H1 (cell line): ENCODE measurements at regions of chr11 and their contacts with region 1.

Region 1: GRCh38 chr11:120912504-120912903 is 111.4 kb upstream of the TBCEL start:
- DNase-seq: no peak
- H3K4me3 ChIP-seq: no peak overlapping the region
- H3K27ac ChIP-seq: no peak overlapping the region
- H3K4me1 ChIP-seq: no peaks in the 10 kb centered on the region
- H3K27me3 ChIP-seq: no peaks in the 10 kb centered on the region; a peak in 1 of 7 replicates
- CTCF ChIP-seq: peak in 2 of 3 experiments; percentile 42 to 75; a peak in 2 of 4 replicates
- EP300 ChIP-seq: no peak
- POLR2A ChIP-seq: no peak
- RAD21 ChIP-seq: peak; percentile 28 to 49

Region 2: DNA sequence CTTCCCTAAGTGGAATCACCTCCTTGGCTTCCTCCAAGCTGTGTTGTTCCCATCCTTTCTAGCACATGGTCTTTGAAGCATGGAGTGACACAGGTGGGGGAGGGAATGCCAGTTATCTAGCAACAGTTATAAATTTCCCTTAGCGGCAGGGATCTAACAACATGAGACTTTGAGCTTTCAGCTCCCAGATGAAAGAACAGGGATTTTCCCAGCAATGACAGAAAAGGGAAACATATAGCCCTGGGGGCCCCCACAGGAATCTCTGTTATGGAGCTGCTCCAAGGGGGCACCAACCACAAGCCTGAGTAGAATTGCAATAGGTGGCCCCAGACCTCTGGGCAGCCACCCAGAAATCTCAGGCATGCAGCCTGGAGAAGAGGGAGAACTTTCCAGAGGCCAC is 238.0 kb before region 1 on chr11:
- CTCF ChIA-PET with region 1: no interaction called
- POLR2A ChIA-PET with region 1: no interaction called
- DNase-seq: no peak
- H3K4me3 ChIP-seq: no peak overlapping the region
- H3K27ac ChIP-seq: no peak overlapping the region
- H3K4me1 ChIP-seq: no peaks in the 10 kb centered on the region
- H3K27me3 ChIP-seq: no peaks in the 10 kb centered on the region
- CTCF ChIP-seq: no peak
- EP300 ChIP-seq: no peak
- POLR2A ChIP-seq: no peak
- RAD21 ChIP-seq: no peak

Region 3: DNA sequence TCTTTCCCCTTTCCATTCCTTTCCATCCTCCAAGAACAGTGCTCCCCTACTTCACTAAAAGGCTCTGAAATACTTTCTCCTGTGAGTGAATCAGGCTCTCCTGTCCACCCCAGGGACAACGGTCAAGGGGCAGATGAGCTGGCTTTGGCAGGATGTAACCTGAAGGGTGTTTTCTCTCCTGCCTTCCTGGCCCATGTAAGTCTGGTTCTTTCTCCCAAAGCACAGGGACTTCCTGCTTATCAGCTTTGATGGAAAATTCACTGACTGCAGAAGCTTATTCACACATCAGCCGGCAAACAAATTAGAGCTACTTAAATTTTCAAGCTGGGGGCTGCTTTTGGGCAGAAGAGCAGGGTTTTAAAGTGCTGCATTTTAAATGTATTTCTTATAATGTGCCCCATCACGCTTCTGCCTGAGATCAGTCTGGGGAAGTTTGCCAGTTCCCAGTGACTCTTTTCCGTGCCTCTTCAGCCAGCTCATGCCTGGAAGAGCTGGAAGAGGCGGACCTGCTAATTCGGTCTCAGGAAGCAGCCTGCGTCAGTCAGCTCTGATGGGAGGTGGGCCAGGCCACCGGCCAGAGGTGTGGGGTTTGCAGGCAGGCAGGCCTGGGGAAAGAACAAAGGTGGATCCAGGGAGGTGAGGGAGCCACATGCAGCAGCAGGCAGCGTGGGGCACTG is 29.0 kb before region 1 on chr11:
- CTCF ChIA-PET with region 1: interaction called, 13 read pairs
- POLR2A ChIA-PET with region 1: no interaction called
- DNase-seq: no peak
- H3K4me3 ChIP-seq: no peak overlapping the region
- H3K27ac ChIP-seq: no peak overlapping the region
- H3K4me1 ChIP-seq: peaks cover 0 to 3% (median under 1%) of the 10 kb centered on the region in 4 experiments; a peak in 2 of 7 replicates
- H3K27me3 ChIP-seq: no peaks in the 10 kb centered on the region
- CTCF ChIP-seq: no peak
- EP300 ChIP-seq: no peak
- POLR2A ChIP-seq: no peak
- RAD21 ChIP-seq: no peak

Region 4: DNA sequence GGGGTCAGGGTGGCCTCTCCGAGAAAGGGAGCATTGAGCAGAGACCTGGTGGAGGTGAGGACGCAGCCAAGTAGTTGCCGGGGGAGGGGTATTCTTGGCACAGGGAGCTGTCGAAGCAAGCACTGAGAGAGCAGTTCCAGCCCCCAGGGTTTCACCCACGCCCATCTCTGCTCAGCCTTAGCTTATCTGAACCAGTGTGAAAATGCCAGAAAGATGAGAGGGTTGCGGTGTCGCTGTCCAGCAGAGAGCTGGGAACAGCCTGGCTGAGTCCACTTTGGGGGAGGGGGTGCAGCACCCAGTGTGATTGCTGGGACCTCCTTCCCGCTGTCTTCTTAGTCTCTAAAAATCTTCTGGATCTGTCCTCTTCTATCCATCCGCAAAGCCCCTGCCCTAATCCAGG is 11.9 kb before region 1 on chr11:
- CTCF ChIA-PET with region 1: interaction called, 36 read pairs
- POLR2A ChIA-PET with region 1: no interaction called
- DNase-seq: no peak
- H3K4me3 ChIP-seq: no peak overlapping the region
- H3K27ac ChIP-seq: no peak overlapping the region
- H3K4me1 ChIP-seq: peaks cover 0 to 6% (median 0%) of the 10 kb centered on the region in 4 experiments; a peak in 2 of 7 replicates
- H3K27me3 ChIP-seq: no peaks in the 10 kb centered on the region; a peak in 1 of 7 replicates
- CTCF ChIP-seq: no peak
- EP300 ChIP-seq: no peak
- POLR2A ChIP-seq: no peak
- RAD21 ChIP-seq: no peak

Region 5: DNA sequence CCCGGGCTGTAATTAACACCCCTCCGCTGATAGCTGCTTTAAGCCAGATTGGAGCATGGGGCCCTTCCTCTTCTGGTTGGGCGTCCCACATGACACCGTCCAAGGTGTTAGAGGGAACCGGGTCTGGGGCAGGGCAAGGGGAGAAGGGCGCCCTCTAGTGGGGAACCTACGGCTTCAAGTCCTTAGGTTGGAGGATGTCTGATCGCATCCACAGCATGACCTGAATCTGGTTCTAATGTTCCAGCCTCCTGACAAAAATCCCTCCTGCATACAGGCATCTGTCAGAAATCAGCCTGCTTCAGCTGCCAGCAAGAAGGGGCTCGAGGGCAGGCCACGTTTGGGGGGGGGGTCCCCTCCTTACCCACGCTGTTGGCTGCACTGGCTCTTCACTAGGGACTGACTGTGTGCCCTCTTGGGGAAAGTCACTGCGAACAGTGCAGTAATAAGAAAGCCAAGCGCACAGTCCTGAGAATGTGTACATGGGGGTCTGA is 17.2 kb after region 1 on chr11:
- CTCF ChIA-PET with region 1: interaction called, 158 read pairs
- POLR2A ChIA-PET with region 1: interaction called, 3 read pairs
- DNase-seq: peak; percentile 73 to 88
- H3K4me3 ChIP-seq: no peak overlapping the region
- H3K27ac ChIP-seq: no peak overlapping the region
- H3K4me1 ChIP-seq: peaks cover 0 to 8% (median 0%) of the 10 kb centered on the region in 4 experiments; a peak in 3 of 7 replicates
- H3K27me3 ChIP-seq: peaks cover 0 to 3% (median 0%) of the 10 kb centered on the region in 4 experiments; a peak in 1 of 7 replicates
- CTCF ChIP-seq: peak; percentile 92 to 93 (median 93)
- EP300 ChIP-seq: no peak
- POLR2A ChIP-seq: no peak
- RAD21 ChIP-seq: peak; percentile 86 to 90

Region 6: DNA sequence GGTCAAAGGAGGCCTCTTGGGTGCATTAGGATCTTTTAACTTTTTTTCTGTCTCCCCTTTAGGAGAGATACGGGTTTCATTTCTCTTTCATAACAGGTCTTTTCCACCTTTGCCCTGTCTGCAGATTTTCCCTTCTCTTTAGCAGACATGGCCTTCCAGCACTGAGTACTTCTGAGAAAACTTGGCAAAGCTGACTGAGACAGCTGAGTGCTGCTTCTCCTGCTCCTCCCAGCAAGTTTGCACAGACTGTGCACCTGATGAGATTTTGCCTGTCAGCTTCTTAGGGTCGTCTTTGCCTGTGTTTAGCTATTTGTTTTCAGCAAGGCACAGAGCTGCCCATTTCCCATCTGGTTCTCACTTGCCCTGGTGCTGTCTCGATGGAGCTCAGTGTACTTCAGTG is 23.9 kb after region 1 on chr11:
- CTCF ChIA-PET with region 1: interaction called, 158 read pairs
- POLR2A ChIA-PET with region 1: no interaction called
- DNase-seq: no peak
- H3K4me3 ChIP-seq: no peak overlapping the region
- H3K27ac ChIP-seq: no peak overlapping the region
- H3K4me1 ChIP-seq: peaks cover 2 to 10% (median 6%) of the 10 kb centered on the region in 4 experiments; a peak in 6 of 7 replicates
- H3K27me3 ChIP-seq: peaks cover 0 to 3% (median 0%) of the 10 kb centered on the region in 4 experiments; a peak in 1 of 7 replicates
- CTCF ChIP-seq: no peak
- EP300 ChIP-seq: no peak
- POLR2A ChIP-seq: no peak
- RAD21 ChIP-seq: no peak

Region 7: GRCh38 chr11:120952461-120953434 is 40.2 kb after region 1 on chr11:
- CTCF ChIA-PET with region 1: interaction called, 12 read pairs
- POLR2A ChIA-PET with region 1: no interaction called
- DNase-seq: peak; percentile 60 to 97
- H3K4me3 ChIP-seq: peak overlapping the region in 1 of 4 experiments; percentile 18; a peak in 1 of 8 replicates
- H3K27ac ChIP-seq: no peak overlapping the region
- H3K4me1 ChIP-seq: peaks cover 11 to 24% (median 15%) of the 10 kb centered on the region in 4 experiments
- H3K27me3 ChIP-seq: no peaks in the 10 kb centered on the region; a peak in 1 of 7 replicates
- CTCF ChIP-seq: peak; percentile 84 to 94 (median 93)
- EP300 ChIP-seq: 0 out of 3 replicates have a peak, but pooled peaks of 1 of the 2 experiments have one; percentile 27
- POLR2A ChIP-seq: no peak
- RAD21 ChIP-seq: peak; percentile 94 to 98